ENCODE measurements at regions of chrX and their contacts with region 1.

Region 1: DNA sequence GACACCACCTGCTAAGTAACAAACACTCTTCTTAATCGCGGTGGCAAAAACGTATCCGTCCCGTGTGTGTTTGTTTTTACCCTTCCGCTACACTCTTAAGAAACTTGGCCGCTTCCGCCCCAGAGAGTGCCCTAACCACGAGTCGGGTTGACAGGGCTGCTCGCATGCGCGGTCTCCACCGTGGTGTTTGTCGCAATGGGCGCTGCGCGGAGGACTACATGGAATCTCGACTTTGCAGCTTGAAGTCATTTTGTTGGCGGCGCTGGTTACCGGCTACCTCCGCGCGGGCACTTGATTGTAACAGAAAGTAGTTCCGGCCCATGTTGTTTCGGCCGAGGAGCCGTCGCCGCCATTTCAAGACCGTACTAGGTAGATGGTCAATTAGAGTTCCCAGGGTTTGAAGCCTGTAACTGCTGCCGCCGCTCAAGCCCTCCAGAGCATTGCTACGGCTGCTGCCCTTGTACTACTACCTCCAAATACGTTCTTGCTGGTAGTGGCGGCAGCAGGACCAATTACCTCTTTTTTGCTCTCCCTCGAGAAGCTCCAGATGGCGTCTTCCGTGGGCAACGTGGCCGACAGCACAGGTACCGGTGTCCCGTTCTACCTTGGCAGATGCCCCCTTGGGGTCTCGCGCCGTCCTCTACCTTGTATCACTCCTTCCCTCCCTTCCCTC is at the start of gene OGT:
- DNase-seq: peak; percentile 92
- H3K4me3 Mint-ChIP-seq: peak within 1 kb of the TSS; percentile 94
- H3K27ac Mint-ChIP-seq: peak within 1 kb of the TSS; percentile 98
- H3K4me1 Mint-ChIP-seq: peaks cover 19% of the 10 kb centered on the region
- H3K27me3 Mint-ChIP-seq: no peaks in the 10 kb centered on the region
- CTCF ChIP-seq: no peak
- total RNA-seq, gene OGT: 162 and 191 TPM in 2 replicates

Region 2: DNA sequence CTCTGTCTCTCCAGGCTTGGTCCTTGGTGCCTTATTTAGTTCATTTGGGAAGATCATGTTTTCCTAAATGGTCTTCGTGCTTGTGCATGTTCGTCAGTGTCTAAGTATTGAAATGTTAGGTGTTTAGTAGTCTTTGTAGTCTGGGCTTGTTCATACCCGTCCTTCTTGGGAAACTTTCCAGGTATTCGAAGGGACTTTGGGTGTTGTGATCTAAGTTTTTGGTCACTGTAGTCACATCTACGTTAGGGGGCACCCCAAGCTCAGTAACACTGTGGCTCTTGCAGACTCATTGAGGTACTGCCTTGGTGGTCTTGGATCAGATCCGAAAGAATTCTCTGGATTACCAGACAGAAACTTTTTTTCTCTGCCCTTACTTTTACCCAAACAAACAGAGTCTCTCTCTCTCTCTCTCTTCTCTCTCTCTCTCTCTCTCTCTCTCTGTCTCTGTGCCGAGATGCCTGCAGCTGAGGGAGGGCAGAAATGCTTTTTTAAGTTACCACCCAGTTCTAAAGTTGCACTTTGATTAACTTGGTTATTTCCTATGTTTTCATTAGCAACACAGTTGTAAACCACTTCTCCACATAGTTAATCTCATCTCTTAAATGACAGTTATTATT is 534.4 kb before region 1 on chrX:
- CTCF ChIA-PET with region 1: no interaction called
- intact Hi-C with region 1: no loop called
- DNase-seq: peak; percentile 26
- H3K4me3 Mint-ChIP-seq: no peak overlapping the region
- H3K27ac Mint-ChIP-seq: no peak overlapping the region
- H3K4me1 Mint-ChIP-seq: peaks cover 7% of the 10 kb centered on the region
- H3K27me3 Mint-ChIP-seq: peaks cover 41% of the 10 kb centered on the region
- CTCF ChIP-seq: no peak

Region 3: DNA sequence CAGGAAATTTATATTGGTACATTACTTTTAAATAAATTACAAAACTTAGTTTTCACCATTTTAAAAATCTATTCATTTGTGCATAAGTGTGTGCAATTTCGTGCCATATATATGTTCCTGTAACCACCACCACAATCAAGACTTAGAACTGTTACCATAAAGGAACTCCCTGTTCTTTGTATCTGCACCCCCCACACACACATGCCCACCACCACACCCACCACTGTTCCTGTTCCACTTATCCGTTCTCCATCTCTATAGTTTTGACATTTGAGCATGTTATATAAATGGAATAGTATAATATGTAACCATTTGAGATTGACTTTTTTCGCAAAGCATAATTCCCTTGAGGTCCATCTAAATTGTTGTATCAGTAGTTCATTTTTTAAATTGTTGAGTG is 93.0 kb before region 1 on chrX:
- CTCF ChIA-PET with region 1: no interaction called
- intact Hi-C with region 1: loop called (anchors 10 kb)
- DNase-seq: no peak
- H3K4me3 Mint-ChIP-seq: no peak overlapping the region
- H3K27ac Mint-ChIP-seq: no peak overlapping the region
- H3K4me1 Mint-ChIP-seq: no peaks in the 10 kb centered on the region
- H3K27me3 Mint-ChIP-seq: no peaks in the 10 kb centered on the region
- CTCF ChIP-seq: no peak

Region 4: GRCh38 chrX:71492231-71493065 is 40.4 kb before region 1 on chrX:
- CTCF ChIA-PET with region 1: no interaction called
- intact Hi-C with region 1: loop called (anchors 5 kb)
- DNase-seq: peak; percentile 40
- H3K4me3 Mint-ChIP-seq: peak overlapping the region; percentile 72
- H3K27ac Mint-ChIP-seq: peak overlapping the region; percentile 30
- H3K4me1 Mint-ChIP-seq: no peaks in the 10 kb centered on the region
- H3K27me3 Mint-ChIP-seq: peaks cover 15% of the 10 kb centered on the region
- CTCF ChIP-seq: no peak

Region 5: GRCh38 chrX:71543316-71543715 is 10.4 kb after region 1 on chrX:
- CTCF ChIA-PET with region 1: interaction called, 13 read pairs
- intact Hi-C with region 1: no loop called
- DNase-seq: no peak
- H3K4me3 Mint-ChIP-seq: peak overlapping the region; percentile 4
- H3K27ac Mint-ChIP-seq: peak overlapping the region; percentile 65
- H3K4me1 Mint-ChIP-seq: peaks cover 32% of the 10 kb centered on the region
- H3K27me3 Mint-ChIP-seq: no peaks in the 10 kb centered on the region
- CTCF ChIP-seq: no peak